ENCODE measurements at regions of chr1 and their contacts with region 1.

Region 1: DNA sequence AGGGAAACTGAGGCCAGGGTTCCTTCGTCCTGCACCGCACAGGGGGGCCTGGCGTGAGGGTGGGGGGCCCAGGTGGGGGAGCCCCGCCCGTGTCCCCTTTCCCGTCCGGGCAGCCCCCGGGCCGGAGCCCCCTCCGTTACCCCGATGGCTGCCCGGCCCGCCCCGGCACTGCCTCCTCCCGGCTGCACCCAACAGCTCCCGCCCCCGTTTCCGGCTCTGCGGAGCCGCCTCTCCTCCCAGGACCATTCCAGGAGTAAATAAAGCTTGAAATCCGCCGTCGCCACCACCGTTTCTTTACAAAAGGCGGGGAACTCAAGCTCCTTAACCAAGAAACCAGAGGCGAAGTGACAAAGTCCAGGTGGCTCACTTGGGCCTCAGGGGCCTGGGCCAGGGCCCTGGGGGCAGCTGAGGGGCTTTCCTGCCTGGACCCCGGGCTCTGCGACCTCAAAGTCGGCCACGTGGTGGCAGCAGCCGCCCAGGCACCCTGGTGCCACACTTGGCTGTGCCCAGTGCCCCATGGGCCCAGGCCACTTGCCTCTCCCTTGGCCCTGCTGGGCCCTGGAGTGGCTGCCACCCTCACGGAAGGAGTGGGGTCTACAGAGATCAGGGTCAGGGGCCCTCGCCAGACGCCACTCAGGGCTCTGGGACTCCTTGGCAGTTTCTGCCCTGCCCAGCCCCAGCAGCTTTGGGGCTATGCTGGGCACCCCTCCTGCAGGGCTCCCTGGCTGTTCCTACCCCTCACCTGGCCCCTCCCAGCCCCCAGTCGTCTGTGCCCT is 514 bp upstream of the FAAP20 start:
- DNase-seq: peak; percentile 86
- H3K4me3 ChIP-seq: peak overlapping the region; percentile 71 to 92 (median 73)
- H3K27ac ChIP-seq: peak overlapping the region; percentile 78
- H3K4me1 ChIP-seq: peaks cover 19% of the 10 kb centered on the region
- H3K27me3 ChIP-seq: no peaks in the 10 kb centered on the region
- CTCF ChIP-seq: peak; percentile 96 to 97
- POLR2A ChIP-seq: peak; percentile 62

Region 2: GRCh38 chr1:2108213-2108876 is 86.7 kb before region 1 on chr1:
- CTCF ChIA-PET with region 1: no interaction called
- POLR2A ChIA-PET with region 1: no interaction called
- dilution Hi-C with region 1: no loop called
- intact Hi-C with region 1: no loop called
- DNase-seq: no peak
- H3K4me3 ChIP-seq: no peak overlapping the region
- H3K27ac ChIP-seq: no peak overlapping the region
- H3K4me1 ChIP-seq: no peaks in the 10 kb centered on the region
- H3K27me3 ChIP-seq: no peaks in the 10 kb centered on the region
- CTCF ChIP-seq: peak; percentile 23 to 33
- POLR2A ChIP-seq: no peak

Region 3: DNA sequence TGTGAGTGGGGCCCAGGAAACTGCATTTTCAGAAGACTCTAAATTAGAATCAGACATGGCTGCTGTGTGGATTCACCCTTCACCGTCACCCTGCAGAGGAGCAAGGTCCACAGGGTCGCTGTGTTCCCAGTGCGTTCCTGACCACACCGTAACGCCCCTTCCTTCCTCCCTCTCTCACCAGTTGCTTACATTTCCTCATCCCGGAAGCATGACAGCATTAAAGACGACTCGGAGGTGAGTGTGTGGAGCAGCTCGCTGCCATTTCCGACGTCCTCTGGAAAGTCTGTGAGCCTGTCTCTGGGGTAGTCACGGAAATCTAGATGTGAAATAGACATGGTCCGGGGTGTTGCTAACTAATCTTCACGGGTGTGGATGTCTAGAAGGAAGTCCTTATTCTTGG is 46.4 kb before region 1 on chr1:
- CTCF ChIA-PET with region 1: no interaction called
- POLR2A ChIA-PET with region 1: no interaction called
- dilution Hi-C with region 1: no loop called
- intact Hi-C with region 1: no loop called
- DNase-seq: peak; percentile 29
- H3K4me3 ChIP-seq: no peak overlapping the region
- H3K27ac ChIP-seq: peak overlapping the region; percentile 21
- H3K4me1 ChIP-seq: peaks cover 12% of the 10 kb centered on the region
- H3K27me3 ChIP-seq: no peaks in the 10 kb centered on the region
- CTCF ChIP-seq: no peak
- POLR2A ChIP-seq: no peak

Region 4: GRCh38 chr1:2174348-2175054 is 20.6 kb before region 1 on chr1:
- CTCF ChIA-PET with region 1: interaction called, 29 read pairs
- POLR2A ChIA-PET with region 1: no interaction called
- dilution Hi-C with region 1: no loop called
- intact Hi-C with region 1: no loop called
- DNase-seq: peak; percentile 54
- H3K4me3 ChIP-seq: no peak overlapping the region
- H3K27ac ChIP-seq: no peak overlapping the region
- H3K4me1 ChIP-seq: no peaks in the 10 kb centered on the region
- H3K27me3 ChIP-seq: no peaks in the 10 kb centered on the region
- CTCF ChIP-seq: peak; percentile 91 to 95
- POLR2A ChIP-seq: no peak

Region 5: GRCh38 chr1:2227346-2228153 is 32.5 kb after region 1 on chr1:
- CTCF ChIA-PET with region 1: interaction called, 35 read pairs
- POLR2A ChIA-PET with region 1: interaction called, 6 read pairs
- dilution Hi-C with region 1: no loop called
- intact Hi-C with region 1: loop called (anchors 1 kb)
- DNase-seq: peak; percentile 92
- H3K4me3 ChIP-seq: peak overlapping the region in 2 of 3 experiments; percentile 63 to 95
- H3K27ac ChIP-seq: peak overlapping the region; percentile 98
- H3K4me1 ChIP-seq: peaks cover 20% of the 10 kb centered on the region
- H3K27me3 ChIP-seq: no peaks in the 10 kb centered on the region
- CTCF ChIP-seq: no peak
- POLR2A ChIP-seq: peak; percentile 16

Region 6: GRCh38 chr1:2314803-2315673 is 120.0 kb after region 1 on chr1:
- CTCF ChIA-PET with region 1: interaction called, 32 read pairs
- POLR2A ChIA-PET with region 1: no interaction called
- dilution Hi-C with region 1: no loop called
- intact Hi-C with region 1: loop called (anchors 5 kb)
- DNase-seq: peak; percentile 29
- H3K4me3 ChIP-seq: peak overlapping the region in 1 of 3 experiments; percentile 54
- H3K27ac ChIP-seq: no peak overlapping the region
- H3K4me1 ChIP-seq: peaks cover 7% of the 10 kb centered on the region
- H3K27me3 ChIP-seq: no peaks in the 10 kb centered on the region
- CTCF ChIP-seq: peak; percentile 44 to 72
- POLR2A ChIP-seq: no peak

Region 7: DNA sequence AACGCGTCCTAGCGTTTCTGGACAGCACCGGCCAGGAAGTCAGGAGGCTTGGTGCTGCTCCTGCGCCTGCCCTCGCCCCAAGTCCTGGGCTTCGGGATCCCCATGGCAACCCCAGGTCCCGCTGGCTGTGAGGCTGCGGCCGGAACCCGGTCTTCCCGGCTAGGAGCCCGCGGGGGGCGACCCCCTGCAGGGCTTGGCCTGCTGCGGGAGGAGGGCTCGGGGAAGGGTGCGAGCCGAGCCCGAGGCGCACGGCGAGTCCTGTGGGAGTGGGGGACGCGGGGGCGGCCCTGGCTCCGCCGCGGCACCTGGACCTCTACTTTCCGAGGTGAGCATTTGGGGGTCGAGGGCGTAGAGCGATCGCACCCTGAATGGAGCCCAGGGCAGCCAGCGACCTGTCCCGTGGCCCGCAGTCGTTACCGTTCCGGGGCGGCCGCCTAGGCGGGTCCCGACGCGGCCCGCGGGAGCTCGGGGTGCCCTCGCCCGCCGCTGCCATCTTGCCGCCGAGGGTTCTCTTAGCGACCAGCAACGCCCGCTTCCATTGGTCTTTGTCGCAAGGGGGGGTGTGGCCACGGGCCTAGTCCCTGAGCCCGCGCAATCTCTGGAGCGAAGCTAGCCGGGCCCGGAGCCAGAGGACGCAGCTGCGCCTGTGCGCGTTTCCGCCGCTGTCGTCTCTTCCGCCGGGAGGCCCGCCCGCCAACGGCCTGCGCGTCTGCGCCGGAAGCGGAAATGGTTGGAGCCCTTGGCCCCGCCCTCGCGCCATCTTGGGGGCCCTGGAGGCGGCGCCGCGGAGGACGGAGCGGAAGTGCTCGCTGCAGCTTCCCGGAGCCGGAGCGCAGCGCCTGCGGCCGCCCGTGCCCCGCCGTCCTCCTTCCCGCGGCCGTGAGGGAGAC is 196.2 kb after region 1 on chr1 and contains the starts of genes MORN1 and RER1:
- CTCF ChIA-PET with region 1: interaction called, 631 read pairs
- POLR2A ChIA-PET with region 1: no interaction called
- dilution Hi-C with region 1: no loop called
- intact Hi-C with region 1: loop called (anchors 2 kb)
- DNase-seq: peak; percentile 100
- H3K4me3 ChIP-seq: peak within 1 kb of the TSS; percentile 80 to 92 (median 88)
- H3K27ac ChIP-seq: peak within 1 kb of the TSS; percentile 77
- H3K4me1 ChIP-seq: peaks cover 16% of the 10 kb centered on the region
- H3K27me3 ChIP-seq: no peaks in the 10 kb centered on the region
- CTCF ChIP-seq: no peak
- POLR2A ChIP-seq: peak; percentile 55
- total RNA-seq, gene MORN1: 6.4 and 6.5 TPM in 2 replicates
- total RNA-seq, gene RER1: 174 and 179 TPM in 2 replicates

Region 8: GRCh38 chr1:2586154-2587070 is 391.3 kb after region 1 on chr1 and contains the start of gene PRXL2B:
- CTCF ChIA-PET with region 1: no interaction called
- POLR2A ChIA-PET with region 1: no interaction called
- dilution Hi-C with region 1: no loop called
- intact Hi-C with region 1: loop called (anchors 5 kb)
- DNase-seq: peak; percentile 98
- H3K4me3 ChIP-seq: peak within 1 kb of the TSS; percentile 56 to 73 (median 61)
- H3K27ac ChIP-seq: peak within 1 kb of the TSS; percentile 75
- H3K4me1 ChIP-seq: peaks cover 15% of the 10 kb centered on the region
- H3K27me3 ChIP-seq: no peaks in the 10 kb centered on the region
- CTCF ChIP-seq: no peak
- POLR2A ChIP-seq: peak; percentile 33
- total RNA-seq, gene PRXL2B: 55.8 and 56.8 TPM in 2 replicates